ENCODE measurements at regions of chr14 and their contacts with region 1.

Region 1: GRCh38 chr14:50116181-50116956 is at the start of gene VCPKMT:
- DNase-seq: peak; percentile 97
- ATAC-seq: peak; percentile 96
- H3K4me3 Mint-ChIP-seq: peak within 1 kb of the TSS; percentile 95
- H3K27ac Mint-ChIP-seq: peak within 1 kb of the TSS; percentile 97
- H3K4me1 Mint-ChIP-seq: peaks cover 51% of the 10 kb centered on the region
- H3K27me3 Mint-ChIP-seq: no peaks in the 10 kb centered on the region
- CTCF ChIP-seq: no peak
- total RNA-seq, gene VCPKMT: 19.9 and 20.8 TPM in 2 replicates

Region 2: DNA sequence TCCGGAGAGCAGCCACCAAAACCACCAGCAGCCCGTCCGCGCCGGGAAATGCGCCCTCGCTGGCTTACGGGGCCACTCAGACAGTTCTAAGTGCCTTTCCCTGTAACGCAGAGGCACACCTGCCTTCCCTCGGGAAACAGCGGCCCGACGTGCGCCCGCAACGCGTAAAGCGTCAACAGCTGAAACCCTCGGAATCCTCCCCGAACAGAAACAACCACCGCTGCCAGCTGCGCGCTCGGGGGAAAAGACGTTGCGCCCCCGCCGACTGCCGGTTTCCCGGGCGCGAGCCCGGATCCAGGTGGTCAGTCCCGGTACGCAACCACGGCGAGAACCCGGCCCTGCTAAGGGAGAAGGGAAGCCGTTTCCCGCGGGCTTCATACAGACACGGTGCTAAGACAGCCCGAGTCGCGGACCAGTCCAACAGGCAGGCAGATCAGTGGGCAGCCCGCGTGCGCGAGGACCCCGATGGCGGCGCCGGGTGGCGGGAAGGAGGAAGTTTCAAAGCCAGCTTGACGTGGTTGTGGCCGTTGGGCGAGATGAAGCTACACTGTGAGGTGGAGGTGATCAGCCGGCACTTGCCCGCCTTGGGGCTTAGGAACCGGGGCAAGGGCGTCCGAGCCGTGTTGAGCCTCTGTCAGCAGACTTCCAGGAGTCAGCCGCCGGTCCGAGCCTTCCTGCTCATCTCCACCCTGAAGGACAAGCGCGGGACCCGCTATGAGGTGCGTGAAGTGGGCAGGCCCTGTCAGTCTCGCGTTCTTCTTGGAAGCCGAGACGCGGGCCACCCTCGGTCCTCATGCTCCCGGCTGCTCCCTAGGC is 517.7 kb before region 1 on chr14 and contains the start of gene LRR1:
- CTCF ChIA-PET with region 1: no interaction called
- POLR2A ChIA-PET with region 1: interaction called, 8 read pairs
- intact Hi-C with region 1: loop called (anchors 1 kb)
- DNase-seq: peak; percentile 94
- ATAC-seq: peak; percentile 67
- H3K4me3 Mint-ChIP-seq: peak within 1 kb of the TSS; percentile 95
- H3K27ac Mint-ChIP-seq: peak within 1 kb of the TSS; percentile 96
- H3K4me1 Mint-ChIP-seq: peaks cover 60% of the 10 kb centered on the region
- H3K27me3 Mint-ChIP-seq: no peaks in the 10 kb centered on the region
- CTCF ChIP-seq: no peak
- total RNA-seq, gene LRR1: 15.1 and 19.9 TPM in 2 replicates

Region 3: DNA sequence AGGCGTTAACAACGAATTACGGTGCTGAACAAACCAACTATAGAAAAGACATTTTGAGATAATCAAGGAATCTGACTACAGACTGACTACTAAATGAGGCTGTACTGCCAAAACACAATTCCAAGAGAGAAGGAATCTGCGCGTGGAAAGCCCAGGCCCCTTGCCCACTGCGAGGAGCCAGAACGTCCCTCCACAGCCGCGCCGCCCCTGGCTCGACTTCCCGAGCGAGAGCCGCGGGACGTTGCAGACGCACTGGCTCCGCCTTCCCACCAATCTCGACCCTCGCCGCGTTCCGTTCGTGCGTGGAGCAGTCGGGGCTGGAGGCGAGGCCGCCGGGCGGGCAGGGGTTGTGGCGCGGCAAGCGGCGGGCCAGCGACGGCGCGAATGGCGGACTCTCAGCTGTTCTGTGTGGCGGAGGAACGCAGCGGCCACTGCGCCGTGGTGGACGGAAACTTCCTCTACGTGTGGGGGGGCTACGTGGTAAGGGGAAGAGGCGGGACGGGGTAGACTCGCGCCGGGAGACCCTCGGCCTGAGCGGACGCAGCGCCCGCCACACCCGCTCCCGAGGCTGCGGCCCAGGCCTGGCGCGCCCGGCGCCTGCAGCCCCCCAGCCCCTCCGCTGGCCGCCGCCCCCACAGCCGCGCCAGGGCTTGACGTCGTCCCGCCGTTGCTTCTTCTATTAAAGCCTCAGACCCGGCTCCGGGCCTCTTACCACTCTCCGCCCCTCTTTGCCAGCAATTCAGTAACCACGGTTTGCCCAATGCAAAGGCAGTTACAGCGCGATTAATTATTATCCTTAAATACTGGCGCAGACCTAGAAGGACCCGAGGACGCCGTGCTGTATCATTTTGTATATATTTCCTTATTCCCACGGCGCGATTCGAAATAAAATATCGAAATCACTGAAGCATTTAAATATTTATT is 423.3 kb before region 1 on chr14 and contains the start of gene KLHDC1:
- CTCF ChIA-PET with region 1: no interaction called
- POLR2A ChIA-PET with region 1: no interaction called
- intact Hi-C with region 1: loop called (anchors 1 kb)
- DNase-seq: peak; percentile 74
- ATAC-seq: peak; percentile 80
- H3K4me3 Mint-ChIP-seq: peak within 1 kb of the TSS; percentile 83
- H3K27ac Mint-ChIP-seq: peak within 1 kb of the TSS; percentile 84
- H3K4me1 Mint-ChIP-seq: peaks cover 24% of the 10 kb centered on the region
- H3K27me3 Mint-ChIP-seq: no peaks in the 10 kb centered on the region
- CTCF ChIP-seq: no peak
- total RNA-seq, gene KLHDC1: 5.7 and 6.9 TPM in 2 replicates

Region 4: DNA sequence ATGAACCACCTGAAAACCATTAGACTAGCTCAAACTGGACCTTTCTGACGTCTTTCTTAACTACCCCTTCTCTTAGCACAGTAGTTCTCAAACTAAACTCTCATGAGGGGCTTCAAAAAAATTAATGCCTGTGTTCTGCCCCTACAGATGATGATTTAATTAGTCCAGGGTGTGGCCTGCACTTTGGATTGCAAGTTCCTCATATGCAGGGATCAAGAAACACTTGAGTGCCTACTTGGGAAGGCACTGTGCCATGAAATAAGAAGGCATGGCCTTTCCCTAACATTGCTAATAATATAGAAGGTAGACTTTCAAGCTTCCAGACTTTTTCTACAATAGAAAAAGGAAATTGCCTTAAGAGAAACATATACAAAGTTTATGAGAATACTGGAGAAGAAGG is 371.2 kb before region 1 on chr14:
- CTCF ChIA-PET with region 1: no interaction called
- POLR2A ChIA-PET with region 1: no interaction called
- intact Hi-C with region 1: no loop called
- DNase-seq: no peak
- ATAC-seq: no peak
- H3K4me3 Mint-ChIP-seq: no peak overlapping the region
- H3K27ac Mint-ChIP-seq: no peak overlapping the region
- H3K4me1 Mint-ChIP-seq: no peaks in the 10 kb centered on the region
- H3K27me3 Mint-ChIP-seq: no peaks in the 10 kb centered on the region
- CTCF ChIP-seq: no peak

Region 5: DNA sequence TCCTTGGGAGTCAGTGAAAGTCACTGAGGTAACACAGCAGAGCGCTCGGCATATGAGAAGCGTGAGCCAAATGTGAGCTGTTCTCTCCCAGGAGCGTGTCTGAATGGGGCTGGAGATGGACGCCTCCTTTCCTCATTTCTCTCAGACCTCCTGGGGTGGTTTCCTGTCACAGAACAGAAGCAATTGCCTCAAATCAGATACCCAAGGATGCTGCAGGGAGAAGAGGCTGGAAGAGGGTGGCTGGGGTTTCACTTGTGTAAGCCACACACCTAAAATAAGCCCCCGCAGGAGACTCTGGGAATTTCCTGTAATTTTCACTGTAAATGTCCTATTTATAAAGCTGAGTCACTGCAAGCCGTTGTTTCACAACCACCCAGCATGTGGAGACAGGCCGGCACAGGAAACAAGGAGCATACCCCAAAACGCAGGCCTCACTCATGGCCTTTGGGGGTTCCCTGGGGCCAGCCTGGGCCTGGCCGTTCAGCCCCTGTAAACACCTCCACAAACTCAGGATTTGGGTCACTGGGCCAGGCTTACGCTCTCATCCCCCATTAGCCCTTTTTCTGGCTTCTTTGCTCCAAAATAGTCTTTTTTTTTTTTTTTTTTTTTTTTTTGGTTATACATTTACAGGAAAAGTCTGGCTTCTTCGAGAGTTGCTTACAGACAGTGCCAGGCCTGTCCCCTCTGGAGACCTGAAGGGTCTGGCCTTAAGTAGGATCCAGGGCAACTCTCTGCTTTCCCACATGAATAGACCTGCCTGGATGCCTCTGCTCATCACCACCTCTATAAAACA is 55.3 kb before region 1 on chr14:
- CTCF ChIA-PET with region 1: no interaction called
- POLR2A ChIA-PET with region 1: interaction called, 17 read pairs
- intact Hi-C with region 1: no loop called
- DNase-seq: no peak
- ATAC-seq: peak; percentile 0
- H3K4me3 Mint-ChIP-seq: peak overlapping the region; percentile 87
- H3K27ac Mint-ChIP-seq: peak overlapping the region; percentile 100
- H3K4me1 Mint-ChIP-seq: peaks cover 88% of the 10 kb centered on the region
- H3K27me3 Mint-ChIP-seq: no peaks in the 10 kb centered on the region
- CTCF ChIP-seq: no peak

Region 6: DNA sequence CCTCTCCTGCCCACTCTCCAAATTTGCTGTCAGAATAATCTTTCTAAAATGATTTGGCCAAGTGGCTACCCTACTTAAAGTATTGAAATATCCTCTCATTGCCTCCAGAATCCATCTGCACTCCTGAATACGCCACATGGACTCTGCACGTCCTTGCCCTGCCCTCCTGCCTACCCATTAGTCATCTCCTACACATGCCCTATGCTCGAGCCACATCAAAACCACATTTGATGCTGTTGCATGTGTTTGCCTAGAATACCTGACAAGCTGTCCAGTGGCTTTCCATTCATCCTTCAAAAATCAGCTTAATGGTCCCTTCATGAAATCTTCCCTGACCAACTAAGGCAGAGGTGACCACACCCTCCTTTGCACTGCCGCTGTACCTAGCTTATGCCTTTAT is 17.0 kb before region 1 on chr14:
- CTCF ChIA-PET with region 1: interaction called, 8 read pairs
- POLR2A ChIA-PET with region 1: interaction called, 17 read pairs
- intact Hi-C with region 1: no loop called
- DNase-seq: no peak
- ATAC-seq: no peak
- H3K4me3 Mint-ChIP-seq: no peak overlapping the region
- H3K27ac Mint-ChIP-seq: peak overlapping the region; percentile 62
- H3K4me1 Mint-ChIP-seq: peaks cover 74% of the 10 kb centered on the region
- H3K27me3 Mint-ChIP-seq: no peaks in the 10 kb centered on the region
- CTCF ChIP-seq: no peak

Region 7: DNA sequence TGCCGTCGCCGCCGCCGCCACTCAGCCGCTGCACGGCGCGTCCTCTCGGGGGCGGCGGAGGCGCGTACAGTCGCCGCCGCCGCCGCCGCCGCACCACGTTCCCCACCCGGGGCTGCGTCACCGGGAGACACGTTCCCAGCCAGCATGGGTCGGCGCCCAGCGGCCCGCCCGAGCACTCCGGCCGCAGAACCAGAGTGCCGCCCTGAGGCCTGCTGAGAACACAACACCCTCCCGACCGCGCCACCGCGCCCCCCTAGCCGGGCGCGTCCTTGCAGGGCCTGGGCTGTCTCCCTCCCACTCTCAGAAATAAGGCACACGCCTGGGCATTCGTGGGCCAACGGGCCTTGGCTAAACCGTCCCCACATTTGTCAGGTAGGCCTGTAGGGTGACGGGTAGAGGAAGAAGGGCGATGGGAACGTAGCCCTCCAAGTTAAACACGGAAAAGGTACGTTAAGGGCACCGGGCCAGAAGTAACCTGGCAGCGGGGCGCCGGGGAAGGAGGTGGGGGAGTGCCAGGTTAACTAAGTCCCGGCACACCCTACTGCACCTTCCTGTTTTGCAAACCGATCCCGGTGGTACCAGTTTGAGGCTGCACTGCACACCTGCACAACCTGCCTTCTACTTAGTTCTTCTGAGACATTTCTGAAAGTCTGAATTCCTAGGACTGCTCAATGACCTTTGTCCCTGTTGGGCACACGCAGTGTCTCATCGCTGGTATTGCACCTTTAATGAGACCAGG is 416.3 kb after region 1 on chr14 and contains the start of gene MAP4K5:
- CTCF ChIA-PET with region 1: no interaction called
- POLR2A ChIA-PET with region 1: no interaction called
- intact Hi-C with region 1: loop called (anchors 1 kb)
- DNase-seq: peak; percentile 83
- ATAC-seq: peak; percentile 94
- H3K4me3 Mint-ChIP-seq: peak within 1 kb of the TSS; percentile 84
- H3K27ac Mint-ChIP-seq: peak within 1 kb of the TSS; percentile 88
- H3K4me1 Mint-ChIP-seq: peaks cover 47% of the 10 kb centered on the region
- H3K27me3 Mint-ChIP-seq: no peaks in the 10 kb centered on the region
- CTCF ChIP-seq: no peak
- total RNA-seq, gene MAP4K5: 32.5 and 34.1 TPM in 2 replicates

Measured in activated B cell treated with CpG ODN at 0.5 μM for 24 hours (primary cell).